ENCODE measurements at regions of chr4 and their contacts with region 1.

Region 1: DNA sequence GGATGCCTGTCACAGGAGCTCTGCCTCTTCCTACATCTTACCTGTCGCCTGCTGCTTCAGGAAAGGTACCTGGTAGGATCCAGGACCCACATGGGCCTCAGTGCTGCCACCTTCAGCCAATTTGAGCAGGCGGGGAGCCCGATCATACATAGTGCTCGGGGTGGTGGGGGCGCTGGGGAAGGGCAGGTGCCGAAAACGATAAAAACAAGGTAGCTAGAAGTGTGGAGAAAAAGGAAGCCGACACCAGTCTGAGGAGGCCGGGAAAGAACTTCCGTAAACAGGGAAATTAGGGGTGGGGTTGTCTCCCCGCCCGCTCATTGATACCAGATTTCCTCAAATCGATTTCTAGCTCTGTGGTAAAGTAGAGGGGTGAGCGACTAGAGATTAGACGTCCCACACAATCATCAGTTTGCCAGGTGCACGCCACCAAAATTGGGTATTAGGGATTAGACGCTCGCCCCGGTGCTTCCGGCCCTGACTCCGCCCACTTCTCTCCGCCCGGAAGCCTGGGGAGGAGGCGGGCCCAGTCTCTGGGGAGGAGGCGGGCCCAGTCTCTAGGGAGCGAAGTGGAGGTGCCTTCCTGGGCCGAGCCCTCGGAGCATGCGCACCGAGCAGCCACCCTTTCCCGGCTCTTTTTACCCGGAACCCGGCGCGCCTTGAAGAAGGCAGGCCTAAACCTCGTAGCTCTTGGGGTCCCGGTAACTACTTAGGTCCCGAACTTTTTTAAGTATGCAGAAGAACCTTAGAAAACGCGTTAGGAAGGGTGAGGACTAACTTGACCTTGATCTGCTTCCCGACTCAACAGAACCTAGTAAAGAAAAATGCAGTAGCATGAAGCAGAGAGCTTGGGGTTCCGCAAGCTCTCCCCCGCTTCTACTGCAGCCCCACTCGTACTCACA is at the start of gene STPG2:
- DNase-seq: peak; percentile 85 to 95 (median 91)
- ATAC-seq: peak; percentile 95 to 97
- H3K4me3 Mint-ChIP-seq: peak within 1 kb of the TSS; percentile 89 to 99 (median 93)
- H3K27ac Mint-ChIP-seq: peak within 1 kb of the TSS; percentile 94 to 99 (median 98)
- H3K4me1 Mint-ChIP-seq: peaks cover 5 to 26% (median 18%) of the 10 kb centered on the region in 4 donors
- H3K27me3 Mint-ChIP-seq: no peaks in the 10 kb centered on the region
- polyA plus RNA-seq, gene STPG2: 0.09 to 0.10 TPM in 2 of 3 donors, not detected in the other

Region 2: GRCh38 chr4:98260579-98261290 is 117.5 kb after region 1 on chr4:
- POLR2A ChIA-PET with region 1: interaction called, 40 read pairs
- DNase-seq: peak in 8 of 10 donors; percentile 69 to 94 (median 82)
- ATAC-seq: peak; percentile 74 to 83
- H3K4me3 Mint-ChIP-seq: peak overlapping the region; percentile 91 to 96 (median 94)
- H3K27ac Mint-ChIP-seq: peak overlapping the region; percentile 79 to 97 (median 92)
- H3K4me1 Mint-ChIP-seq: peaks cover 31 to 56% (median 49%) of the 10 kb centered on the region in 4 donors
- H3K27me3 Mint-ChIP-seq: no peaks in the 10 kb centered on the region

Measured in naive thymus-derived CD8-positive, alpha-beta T cell (primary cell).